ENCODE measurements at regions of chr9 and their contacts with region 1.

Region 1: DNA sequence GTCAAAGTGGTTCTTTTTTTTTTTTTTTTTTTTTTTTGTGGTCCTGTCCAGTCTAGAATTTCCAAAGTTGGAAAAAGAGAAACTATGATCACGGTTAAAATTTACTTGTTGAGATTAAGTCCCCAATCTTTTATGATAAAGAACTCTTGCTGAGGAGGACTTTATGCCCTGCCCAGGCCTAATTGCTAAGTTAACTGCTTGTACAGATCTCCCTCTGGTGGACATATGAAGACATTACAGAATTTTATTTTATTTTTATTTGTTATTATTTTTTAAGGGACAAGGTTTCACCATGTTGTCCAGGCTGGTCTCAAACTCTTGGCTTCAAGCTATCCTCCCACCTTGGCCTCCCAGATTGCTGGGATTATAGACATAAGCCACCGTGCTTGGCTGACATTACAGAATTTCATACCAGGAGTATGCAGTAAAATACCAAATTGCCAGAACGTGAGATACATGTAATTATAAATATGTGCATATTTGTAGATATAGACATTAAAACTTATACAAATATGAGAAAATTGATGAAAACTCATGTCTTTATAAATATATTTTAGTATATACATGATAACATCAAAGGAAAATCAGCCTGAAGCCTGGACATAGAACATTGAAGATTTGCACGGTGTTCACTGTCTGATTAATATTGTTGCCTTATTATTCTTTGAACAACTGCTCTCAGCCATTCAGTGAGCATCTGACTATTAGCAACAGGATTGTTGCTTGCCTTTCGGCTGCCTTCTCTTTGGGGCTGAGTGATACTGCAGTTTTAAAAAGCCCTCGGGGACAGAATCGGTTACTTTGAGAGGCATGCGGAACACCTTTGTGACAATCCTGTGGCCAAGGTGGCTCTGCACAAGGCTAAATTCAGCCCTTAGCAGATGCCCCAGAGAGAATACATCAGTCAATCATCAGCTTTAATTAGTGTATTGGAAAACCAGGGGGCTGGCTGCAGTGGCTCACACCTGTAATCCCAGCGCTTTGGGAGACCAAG is 91.0 kb downstream of the RFK start:
- DNase-seq: no peak
- ATAC-seq: peak; percentile 71
- H3K4me3 ChIP-seq: no peak overlapping the region
- H3K27ac ChIP-seq: no peak overlapping the region
- H3K4me1 ChIP-seq: no peaks in the 10 kb centered on the region
- H3K27me3 ChIP-seq: no peaks in the 10 kb centered on the region

Region 2: DNA sequence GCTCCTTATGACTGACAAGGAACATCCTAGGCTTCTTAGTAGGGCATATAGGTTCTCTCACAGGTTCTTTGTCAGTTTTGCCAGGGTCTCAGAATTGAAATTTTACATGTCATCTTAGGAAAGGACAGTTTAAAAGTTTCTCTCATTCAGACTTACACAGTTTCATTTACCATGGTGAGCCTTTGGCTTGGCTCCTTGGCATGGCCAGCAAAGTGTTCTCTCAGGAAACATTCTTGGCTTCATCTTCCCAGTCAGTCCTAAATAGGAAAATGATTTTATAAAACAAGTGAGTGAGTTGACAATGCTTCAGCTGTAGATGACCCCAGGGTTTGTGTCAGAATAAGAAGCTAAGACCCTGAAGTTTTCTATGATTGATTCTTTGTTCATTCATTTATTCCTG is 221.2 kb before region 1 on chr9:
- intact Hi-C with region 1: loop called in 1 of 2 experiments (anchors 5 kb)
- DNase-seq: no peak
- ATAC-seq: no peak
- H3K4me3 ChIP-seq: no peak overlapping the region
- H3K27ac ChIP-seq: no peak overlapping the region
- H3K4me1 ChIP-seq: no peaks in the 10 kb centered on the region
- H3K27me3 ChIP-seq: no peaks in the 10 kb centered on the region

Region 3: DNA sequence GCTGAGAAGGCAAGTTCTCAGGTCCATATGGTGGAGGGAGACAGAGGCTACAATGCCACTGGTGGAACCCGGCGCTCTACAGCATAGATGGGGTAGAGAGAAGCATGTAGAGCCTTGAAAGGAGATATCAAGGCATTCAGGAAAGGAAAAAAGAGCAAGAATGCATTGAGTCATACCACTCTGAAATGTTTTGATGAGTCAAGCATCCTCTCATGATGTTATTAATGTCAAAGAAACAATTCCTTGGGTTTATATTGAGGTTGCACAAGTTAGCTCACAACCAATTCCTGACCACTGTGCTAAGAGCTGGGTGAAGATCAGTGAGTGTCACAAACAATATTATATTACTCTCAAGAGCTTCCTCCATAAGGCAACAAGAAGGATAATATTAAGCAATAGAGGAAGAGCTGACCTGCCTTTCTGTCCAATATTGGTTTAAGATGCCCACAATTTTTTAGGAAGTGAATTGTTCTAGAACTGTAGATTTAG is 87.0 kb before region 1 on chr9:
- intact Hi-C with region 1: loop called (anchors 5 kb)
- DNase-seq: no peak
- ATAC-seq: peak; percentile 64
- H3K4me3 ChIP-seq: no peak overlapping the region
- H3K27ac ChIP-seq: no peak overlapping the region
- H3K4me1 ChIP-seq: no peaks in the 10 kb centered on the region
- H3K27me3 ChIP-seq: no peaks in the 10 kb centered on the region

Measured in aorta (tissue), 5 donors.